HepG2 (cell line): ENCODE measurements at regions of chr14 and their contacts with region 1.

Region 1: GRCh38 chr14:73458151-73458976 is at the start of gene NUMB:
- DNase-seq: peak; percentile 99
- ATAC-seq: peak; percentile 93
- H3K4me3 ChIP-seq: peak within 1 kb of the TSS; percentile 80 to 96 (median 94)
- H3K27ac ChIP-seq: peak within 1 kb of the TSS; percentile 79
- H3K4me1 ChIP-seq: peaks cover 58% of the 10 kb centered on the region
- H3K27me3 ChIP-seq: no peaks in the 10 kb centered on the region; a peak in 1 of 5 replicates
- CTCF ChIP-seq: no peak
- EP300 ChIP-seq: peak in 1 of 2 experiments; percentile 10; a peak in 2 of 4 replicates
- POLR2A ChIP-seq: peak; percentile 74 to 82
- RAD21 ChIP-seq: peak; percentile 40; the same call in 1 of the 2 replicates
- total RNA-seq, gene NUMB: 20.3 and 27.7 TPM in 2 replicates

Region 2: DNA sequence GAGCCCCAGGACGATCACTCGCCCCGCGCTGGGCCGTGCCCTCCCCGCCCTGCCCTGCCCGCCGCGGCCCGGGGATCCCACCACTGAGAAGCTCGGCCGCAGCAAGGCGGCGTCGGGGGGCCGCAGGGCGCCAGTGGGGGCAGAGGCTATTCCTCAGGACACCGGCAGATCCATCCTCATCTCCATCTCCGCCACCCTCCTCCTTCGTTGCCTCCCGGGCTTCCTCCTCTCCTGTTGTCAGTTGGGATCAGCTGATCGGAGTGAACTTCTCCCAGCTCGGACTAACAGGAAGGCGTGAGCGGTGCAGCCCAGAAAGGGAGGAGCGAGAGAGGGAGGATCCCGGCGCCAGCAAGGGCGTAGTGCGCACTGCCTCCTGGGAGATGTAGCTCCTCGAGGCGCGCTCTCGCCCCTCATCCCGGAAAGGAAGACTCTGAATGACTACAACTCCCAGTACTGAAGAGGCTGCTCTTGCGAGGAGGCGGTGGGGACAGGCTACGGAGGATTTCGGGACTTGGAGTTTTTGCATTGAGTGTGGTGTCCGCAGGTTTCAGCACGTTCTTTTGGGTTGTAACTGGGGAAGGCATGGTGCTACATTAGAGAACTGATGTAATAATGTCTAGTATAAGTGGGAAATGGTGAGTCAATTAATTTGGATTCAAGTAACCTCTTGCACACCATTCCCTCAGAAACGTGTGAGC is 431.4 kb before region 1 on chr14 and contains the start of gene ZFYVE1:
- CTCF ChIA-PET with region 1: no interaction called
- POLR2A ChIA-PET with region 1: interaction called, 5 read pairs
- in situ Hi-C with region 1: loop called (anchors 25 kb)
- intact Hi-C with region 1: no loop called
- DNase-seq: peak; percentile 96
- ATAC-seq: peak; percentile 99
- H3K4me3 ChIP-seq: peak within 1 kb of the TSS; percentile 71 to 97 (median 84)
- H3K27ac ChIP-seq: peak within 1 kb of the TSS; percentile 56
- H3K4me1 ChIP-seq: peaks cover 22% of the 10 kb centered on the region
- H3K27me3 ChIP-seq: no peaks in the 10 kb centered on the region
- CTCF ChIP-seq: 0 out of 2 replicates have a peak, but pooled peaks have one; percentile 7
- EP300 ChIP-seq: no peak
- POLR2A ChIP-seq: peak; percentile 55 to 69
- RAD21 ChIP-seq: no peak
- total RNA-seq, gene ZFYVE1: 2.6 and 2.8 TPM in 2 replicates

Region 3: GRCh38 chr14:73295198-73295796 is 163.1 kb before region 1 on chr14:
- CTCF ChIA-PET with region 1: no interaction called
- POLR2A ChIA-PET with region 1: interaction called, 39 read pairs
- in situ Hi-C with region 1: loop called (anchors 5 kb)
- intact Hi-C with region 1: loop called (anchors 5 kb)
- DNase-seq: peak; percentile 27
- ATAC-seq: no peak
- H3K4me3 ChIP-seq: no peak overlapping the region
- H3K27ac ChIP-seq: no peak overlapping the region
- H3K4me1 ChIP-seq: peaks cover 41% of the 10 kb centered on the region
- H3K27me3 ChIP-seq: no peaks in the 10 kb centered on the region
- CTCF ChIP-seq: peak; percentile 62
- EP300 ChIP-seq: no peak
- POLR2A ChIP-seq: no peak
- RAD21 ChIP-seq: peak; percentile 41; the same call in 1 of the 2 replicates

Region 4: GRCh38 chr14:73418227-73418626 is 40.1 kb before region 1 on chr14:
- CTCF ChIA-PET with region 1: no interaction called
- POLR2A ChIA-PET with region 1: interaction called, 5 read pairs
- in situ Hi-C with region 1: no loop called
- intact Hi-C with region 1: loop called (anchors 5 kb)
- DNase-seq: no peak
- ATAC-seq: no peak
- H3K4me3 ChIP-seq: no peak overlapping the region
- H3K27ac ChIP-seq: no peak overlapping the region
- H3K4me1 ChIP-seq: peaks cover 32% of the 10 kb centered on the region
- H3K27me3 ChIP-seq: no peaks in the 10 kb centered on the region
- CTCF ChIP-seq: no peak
- EP300 ChIP-seq: no peak
- POLR2A ChIP-seq: no peak
- RAD21 ChIP-seq: no peak

Region 5: GRCh38 chr14:73443758-73444157 is 14.6 kb before region 1 on chr14:
- CTCF ChIA-PET with region 1: no interaction called
- POLR2A ChIA-PET with region 1: interaction called, 19 read pairs
- in situ Hi-C with region 1: no loop called
- intact Hi-C with region 1: no loop called
- DNase-seq: peak; percentile 35
- ATAC-seq: peak; percentile 38; the same call in 2 of the 3 replicates
- H3K4me3 ChIP-seq: no peak overlapping the region
- H3K27ac ChIP-seq: peak overlapping the region; percentile 52
- H3K4me1 ChIP-seq: peaks cover 20% of the 10 kb centered on the region
- H3K27me3 ChIP-seq: no peaks in the 10 kb centered on the region
- CTCF ChIP-seq: no peak
- EP300 ChIP-seq: no peak
- POLR2A ChIP-seq: no peak
- RAD21 ChIP-seq: no peak

Region 6: GRCh38 chr14:73949744-73950734 is 491.7 kb after region 1 on chr14 and contains the starts of genes COQ6 and FAM161B:
- CTCF ChIA-PET with region 1: no interaction called
- POLR2A ChIA-PET with region 1: no interaction called
- in situ Hi-C with region 1: no loop called
- intact Hi-C with region 1: no loop called
- DNase-seq: peak; percentile 95
- ATAC-seq: peak; percentile 95
- H3K4me3 ChIP-seq: peak within 1 kb of the TSS; percentile 61 to 82 (median 78)
- H3K27ac ChIP-seq: peak within 1 kb of the TSS; percentile 99
- H3K4me1 ChIP-seq: peaks cover 11% of the 10 kb centered on the region
- H3K27me3 ChIP-seq: no peaks in the 10 kb centered on the region
- CTCF ChIP-seq: peak; percentile 55
- EP300 ChIP-seq: peak in 1 of 2 experiments; percentile 5; a peak in 1 of 4 replicates
- POLR2A ChIP-seq: peak; percentile 83 to 96
- RAD21 ChIP-seq: peak; percentile 60
- total RNA-seq, gene COQ6: 18.1 and 18.9 TPM in 2 replicates
- total RNA-seq, gene FAM161B: 1.6 and 2.0 TPM in 2 replicates